ENCODE measurements at regions of chr16 and their contacts with region 1.

Region 1: GRCh38 chr16:67159593-67160406 is at the starts of genes FBXL8 and TRADD:
- DNase-seq: peak; percentile 79
- H3K4me3 ChIP-seq: peak within 1 kb of the TSS; percentile 78 to 89 (median 81)
- H3K27ac ChIP-seq: peak within 1 kb of the TSS; percentile 38
- H3K4me1 ChIP-seq: peaks cover 18% of the 10 kb centered on the region
- H3K27me3 ChIP-seq: peaks cover 19 to 21% of the 10 kb centered on the region in 2 experiments
- CTCF ChIP-seq: peak; percentile 34 to 59
- POLR2A ChIP-seq: peak; percentile 70
- total RNA-seq, gene FBXL8: 5.4 and 7.0 TPM in 2 replicates
- total RNA-seq, gene TRADD: 15.2 and 17.4 TPM in 2 replicates

Region 2: GRCh38 chr16:66954097-66954659 is 205.6 kb before region 1 on chr16:
- CTCF ChIA-PET with region 1: interaction called, 55 read pairs
- POLR2A ChIA-PET with region 1: no interaction called
- dilution Hi-C with region 1: no loop called
- intact Hi-C with region 1: no loop called
- DNase-seq: peak; percentile 78
- H3K4me3 ChIP-seq: no peak overlapping the region
- H3K27ac ChIP-seq: no peak overlapping the region
- H3K4me1 ChIP-seq: no peaks in the 10 kb centered on the region
- H3K27me3 ChIP-seq: peaks cover 3 to 5% of the 10 kb centered on the region in 2 experiments
- CTCF ChIP-seq: peak; percentile 78 to 85
- POLR2A ChIP-seq: no peak

Region 3: DNA sequence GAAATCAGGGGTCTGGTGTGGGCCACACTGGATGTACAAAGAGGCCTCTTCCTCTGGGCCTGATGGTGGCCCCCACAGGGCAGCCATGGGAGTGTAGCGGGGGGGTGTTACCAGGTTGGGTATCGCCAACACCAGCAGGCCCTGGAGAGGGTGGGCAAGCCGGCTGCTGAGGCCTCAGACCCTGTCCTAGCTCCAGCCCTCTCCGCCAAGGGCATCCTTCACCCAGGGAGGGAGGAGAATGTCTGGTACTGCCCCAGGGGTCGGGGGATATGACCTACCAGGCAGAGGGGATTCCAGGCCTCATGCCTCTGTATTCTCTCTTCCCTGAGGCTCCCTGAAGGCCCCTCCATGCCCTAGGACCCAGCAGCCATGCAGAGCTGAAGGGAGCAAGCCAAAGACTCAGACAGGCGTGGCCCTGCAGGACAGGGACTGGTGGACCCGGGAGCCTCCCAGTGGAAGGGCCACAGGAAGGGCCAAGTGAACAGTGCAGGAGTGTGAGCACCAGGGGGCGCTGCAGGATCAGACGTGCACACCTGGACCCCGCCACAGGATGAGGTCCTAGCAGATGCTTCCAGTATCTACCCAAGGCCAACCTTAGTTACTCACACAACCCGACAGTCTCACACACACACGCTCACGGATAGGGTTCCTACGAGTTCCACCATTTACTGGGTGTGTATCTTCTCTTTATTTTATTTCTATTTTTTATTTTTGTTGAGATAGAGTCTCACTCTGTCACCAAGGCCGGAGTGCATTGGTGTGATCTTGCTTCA is 182.3 kb before region 1 on chr16:
- CTCF ChIA-PET with region 1: interaction called, 58 read pairs
- POLR2A ChIA-PET with region 1: no interaction called
- dilution Hi-C with region 1: no loop called
- intact Hi-C with region 1: loop called (anchors 1 kb)
- DNase-seq: peak; percentile 60
- H3K4me3 ChIP-seq: no peak overlapping the region
- H3K27ac ChIP-seq: no peak overlapping the region
- H3K4me1 ChIP-seq: no peaks in the 10 kb centered on the region
- H3K27me3 ChIP-seq: no peaks in the 10 kb centered on the region
- CTCF ChIP-seq: peak; percentile 86 to 89
- POLR2A ChIP-seq: no peak

Region 4: GRCh38 chr16:67028555-67029248 is 131.1 kb before region 1 on chr16 and contains the start of gene CBFB:
- CTCF ChIA-PET with region 1: interaction called, 302 read pairs
- POLR2A ChIA-PET with region 1: no interaction called
- dilution Hi-C with region 1: no loop called
- intact Hi-C with region 1: no loop called
- DNase-seq: peak; percentile 87
- H3K4me3 ChIP-seq: peak within 1 kb of the TSS; percentile 79 to 94 (median 91)
- H3K27ac ChIP-seq: peak within 1 kb of the TSS; percentile 92
- H3K4me1 ChIP-seq: peaks cover 28% of the 10 kb centered on the region
- H3K27me3 ChIP-seq: no peaks in the 10 kb centered on the region
- CTCF ChIP-seq: peak in 1 of 2 donors; percentile 13
- POLR2A ChIP-seq: peak; percentile 95
- total RNA-seq, gene CBFB: 103 and 113 TPM in 2 replicates

Region 5: GRCh38 chr16:67129422-67129821 is 30.4 kb before region 1 on chr16:
- CTCF ChIA-PET with region 1: interaction called, 11 read pairs
- POLR2A ChIA-PET with region 1: no interaction called
- dilution Hi-C with region 1: no loop called
- intact Hi-C with region 1: no loop called
- DNase-seq: no peak
- H3K4me3 ChIP-seq: no peak overlapping the region
- H3K27ac ChIP-seq: no peak overlapping the region
- H3K4me1 ChIP-seq: no peaks in the 10 kb centered on the region
- H3K27me3 ChIP-seq: no peaks in the 10 kb centered on the region
- CTCF ChIP-seq: no peak
- POLR2A ChIP-seq: no peak

Region 6: GRCh38 chr16:67173808-67174705 is 14.3 kb after region 1 on chr16:
- CTCF ChIA-PET with region 1: interaction called, 29 read pairs
- POLR2A ChIA-PET with region 1: interaction called, 6 read pairs
- dilution Hi-C with region 1: no loop called
- intact Hi-C with region 1: no loop called
- DNase-seq: peak; percentile 90
- H3K4me3 ChIP-seq: peak overlapping the region in 2 of 3 experiments; percentile 9 to 32
- H3K27ac ChIP-seq: peak overlapping the region; percentile 4
- H3K4me1 ChIP-seq: peaks cover 27% of the 10 kb centered on the region
- H3K27me3 ChIP-seq: no peaks in the 10 kb centered on the region
- CTCF ChIP-seq: peak in 1 of 2 donors; percentile 58
- POLR2A ChIP-seq: no peak

Measured in endothelial cell of umbilical vein (primary cell).